T-cell (primary cell): ENCODE measurements at regions of chr2 and their contacts with region 1.

Region 1: DNA sequence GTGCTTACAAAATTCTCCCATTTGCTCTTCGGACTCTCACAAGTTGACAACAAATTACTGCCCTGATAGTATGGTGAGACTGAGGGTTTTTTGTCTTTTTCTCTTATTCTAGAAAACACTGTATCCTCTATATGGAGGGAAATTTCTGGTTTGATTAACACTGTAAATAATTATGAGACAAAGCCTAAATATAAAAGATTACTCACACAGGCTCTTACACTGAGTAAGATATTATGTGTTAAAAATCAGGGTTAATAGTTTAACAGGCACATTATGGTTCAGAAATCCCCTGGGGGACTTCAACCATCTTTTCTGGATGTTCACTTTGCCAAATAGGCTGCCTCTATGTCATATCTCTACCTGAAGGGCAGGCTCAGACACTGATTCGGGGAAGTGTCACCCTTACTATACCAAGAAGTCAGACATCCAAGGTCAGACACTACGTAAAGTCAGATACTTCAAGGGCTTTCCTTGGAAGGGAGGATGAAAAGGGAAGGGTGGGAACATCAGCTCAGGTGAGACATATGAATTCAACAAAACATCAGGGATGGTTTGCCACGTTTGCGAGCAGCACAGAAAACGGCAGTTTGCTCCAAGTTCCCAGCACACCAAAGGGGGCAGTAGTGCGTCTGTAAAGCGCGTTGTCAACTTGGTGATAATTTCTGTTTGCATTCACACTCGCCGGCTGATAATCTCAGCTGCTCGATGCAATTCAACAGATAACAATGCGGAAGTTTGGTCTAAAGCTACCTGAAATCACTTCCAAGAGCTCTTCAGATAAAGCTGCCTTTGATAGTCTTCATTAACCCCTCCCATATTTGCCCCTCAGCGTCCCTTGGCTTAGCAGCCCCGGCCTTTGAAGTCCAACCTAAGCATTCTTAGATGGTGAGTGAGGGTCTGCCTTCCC is 972 bp upstream of the RASGRP3 start:
- DNase-seq: peak; percentile 56 to 93 (median 81)
- ATAC-seq: peak; percentile 77 to 83 (median 80)
- H3K4me3 ChIP-seq: peak overlapping the region; percentile 69 to 95
- H3K4me3 Mint-ChIP-seq: peak overlapping the region; percentile 89 to 96 (median 95)
- H3K27ac ChIP-seq: peak overlapping the region; percentile 93
- H3K27ac Mint-ChIP-seq: peak overlapping the region; percentile 98 to 99
- H3K4me1 ChIP-seq: peaks cover 14 to 16% of the 10 kb centered on the region in 2 experiments
- H3K4me1 Mint-ChIP-seq: peaks cover 31 to 50% (median 41%) of the 10 kb centered on the region in 3 donors
- H3K27me3 ChIP-seq: no peaks in the 10 kb centered on the region
- H3K27me3 Mint-ChIP-seq: no peaks in the 10 kb centered on the region

Region 2: GRCh38 chr2:33583194-33583938 is 107.9 kb after region 1 on chr2:
- CTCF ChIA-PET with region 1: interaction called in 1 of 2 experiments, 39 read pairs
- POLR2A ChIA-PET with region 1: interaction called in 1 of 2 experiments, 4 read pairs
- DNase-seq: peak in 17 of 35 experiments; percentile 4 to 67 (median 16)
- ATAC-seq: peak in 2 of 4 experiments; percentile 36 to 55
- H3K4me3 ChIP-seq: no peak overlapping the region
- H3K4me3 Mint-ChIP-seq: no peak overlapping the region
- H3K27ac ChIP-seq: no peak overlapping the region
- H3K27ac Mint-ChIP-seq: peak overlapping the region in 1 of 2 donors; percentile 76
- H3K4me1 ChIP-seq: peaks cover 0 to 9% of the 10 kb centered on the region in 2 experiments
- H3K4me1 Mint-ChIP-seq: peaks cover 6 to 12% (median 9%) of the 10 kb centered on the region in 3 donors
- H3K27me3 ChIP-seq: no peaks in the 10 kb centered on the region
- H3K27me3 Mint-ChIP-seq: no peaks in the 10 kb centered on the region

Region 3: DNA sequence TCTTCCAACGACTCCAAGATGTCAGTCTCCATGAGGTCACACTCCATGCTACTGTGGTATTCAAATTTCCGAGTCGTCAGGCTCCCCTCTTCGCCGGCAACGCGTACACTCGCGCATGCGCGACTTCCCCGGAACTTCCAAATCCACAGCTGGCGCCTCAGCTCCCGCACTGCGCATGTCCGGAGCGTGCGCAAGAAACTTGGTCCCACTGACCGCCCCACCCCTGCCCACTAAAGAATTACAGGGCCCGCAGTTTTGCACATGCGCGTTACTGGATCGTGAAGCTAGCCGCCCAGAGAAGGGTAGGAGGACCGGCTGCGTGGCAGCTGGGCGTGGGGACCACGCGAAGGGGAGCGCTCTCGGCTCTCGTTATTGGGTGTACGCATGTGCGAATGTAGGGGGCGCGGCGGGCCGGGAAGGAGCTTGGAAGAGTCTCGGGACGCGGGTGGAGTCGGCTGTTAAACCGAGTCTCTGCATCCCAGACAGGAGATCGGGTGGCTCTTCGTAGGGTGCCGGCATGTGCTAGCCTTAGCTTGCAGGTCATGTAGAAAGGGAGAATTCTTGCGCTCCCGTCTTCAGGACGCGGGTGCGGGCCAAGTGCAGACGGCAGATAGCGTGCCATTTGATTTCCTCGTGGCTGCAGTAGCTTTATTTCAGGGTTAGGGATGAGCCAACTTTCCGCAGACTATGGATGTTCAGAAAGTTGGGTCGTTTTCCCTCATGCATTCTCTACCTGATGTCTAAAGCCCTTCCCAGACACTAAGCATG is 123.9 kb after region 1 on chr2 and contains the start of gene FAM98A:
- CTCF ChIA-PET with region 1: interaction called, 5 to 26 read pairs
- POLR2A ChIA-PET with region 1: interaction called in 1 of 2 experiments, 6 read pairs
- DNase-seq: peak; percentile 93 to 100 (median 97)
- ATAC-seq: peak; percentile 92 to 97 (median 96)
- H3K4me3 ChIP-seq: peak within 1 kb of the TSS; percentile 84 to 95
- H3K4me3 Mint-ChIP-seq: peak within 1 kb of the TSS; percentile 90 to 100 (median 92)
- H3K27ac ChIP-seq: peak within 1 kb of the TSS; percentile 72
- H3K27ac Mint-ChIP-seq: peak within 1 kb of the TSS; percentile 91 to 99
- H3K4me1 ChIP-seq: peaks cover 9 to 13% of the 10 kb centered on the region in 2 experiments
- H3K4me1 Mint-ChIP-seq: peaks cover 34 to 45% (median 40%) of the 10 kb centered on the region in 3 donors
- H3K27me3 ChIP-seq: no peaks in the 10 kb centered on the region
- H3K27me3 Mint-ChIP-seq: no peaks in the 10 kb centered on the region
- total RNA-seq, gene FAM98A: 16.1 to 36.2 (median 34.5) TPM

Region 4: GRCh38 chr2:33666628-33667254 is 191.3 kb after region 1 on chr2:
- CTCF ChIA-PET with region 1: no interaction called
- POLR2A ChIA-PET with region 1: no interaction called
- DNase-seq: no peak
- ATAC-seq: no peak
- H3K4me3 ChIP-seq: no peak overlapping the region
- H3K4me3 Mint-ChIP-seq: no peak overlapping the region
- H3K27ac ChIP-seq: no peak overlapping the region
- H3K27ac Mint-ChIP-seq: no peak overlapping the region
- H3K4me1 ChIP-seq: no peaks in the 10 kb centered on the region
- H3K4me1 Mint-ChIP-seq: no peaks in the 10 kb centered on the region
- H3K27me3 ChIP-seq: no peaks in the 10 kb centered on the region
- H3K27me3 Mint-ChIP-seq: peaks cover under 1 to 8% of the 10 kb centered on the region in 2 donors